ENCODE measurements at regions of chr3 and their contacts with region 1.

Region 1: GRCh38 chr3:47781685-47782445 is at the start of gene SMARCC1:
- DNase-seq: peak; percentile 100
- H3K4me3 Mint-ChIP-seq: peak within 1 kb of the TSS; percentile 96
- H3K27ac Mint-ChIP-seq: peak within 1 kb of the TSS; percentile 100
- H3K4me1 Mint-ChIP-seq: peaks cover 22% of the 10 kb centered on the region
- H3K27me3 Mint-ChIP-seq: peaks cover 1% of the 10 kb centered on the region
- total RNA-seq, gene SMARCC1: 148 and 156 TPM in 2 replicates

Region 2: DNA sequence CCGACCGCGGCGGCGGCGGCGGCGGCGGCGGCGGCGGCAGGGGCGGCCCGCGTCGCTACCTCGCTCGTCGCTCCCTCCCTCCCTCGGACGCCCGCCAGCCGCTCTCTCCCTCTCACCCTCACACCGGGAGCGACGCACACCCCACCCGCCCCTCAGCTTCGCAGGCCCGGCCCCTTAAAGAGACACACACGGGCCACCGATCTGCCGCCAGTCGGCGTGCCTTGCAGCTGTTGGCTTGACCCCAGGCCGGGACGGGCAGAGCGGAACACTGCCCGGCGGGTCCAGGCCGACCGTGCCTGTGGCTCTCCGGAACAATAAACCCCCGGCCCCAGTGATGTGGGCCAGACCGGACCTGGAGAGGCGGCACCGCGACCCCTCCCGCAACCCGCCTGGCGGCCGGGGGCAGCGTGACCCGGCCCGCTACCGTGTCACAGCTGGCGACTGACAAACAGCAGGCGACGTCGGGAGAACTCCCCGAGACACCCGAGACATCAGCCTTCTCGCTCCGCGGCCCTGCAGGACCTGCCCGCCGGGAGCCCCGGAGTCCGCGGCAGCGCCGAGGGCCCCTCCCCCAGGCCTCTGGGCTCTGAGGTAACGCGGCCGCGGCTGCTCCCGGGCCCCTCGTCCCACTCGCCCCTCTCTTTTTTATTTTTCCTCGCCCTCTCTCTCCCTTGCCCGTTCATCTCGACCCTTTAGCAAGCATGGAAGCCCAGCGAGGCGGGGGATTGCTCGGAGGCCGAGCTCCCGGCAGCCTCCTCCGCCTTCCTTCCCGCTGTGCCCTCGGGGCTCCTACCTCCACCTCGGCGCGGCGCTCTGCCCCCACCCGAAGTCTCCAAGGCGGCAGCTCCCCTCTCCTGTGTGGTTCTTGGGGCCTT is 617.6 kb before region 1 on chr3 and contains the start of gene SETD2:
- intact Hi-C with region 1: loop called (anchors 10 kb)
- DNase-seq: peak; percentile 94
- H3K4me3 Mint-ChIP-seq: peak within 1 kb of the TSS; percentile 94
- H3K27ac Mint-ChIP-seq: peak within 1 kb of the TSS; percentile 98
- H3K4me1 Mint-ChIP-seq: peaks cover 46% of the 10 kb centered on the region
- H3K27me3 Mint-ChIP-seq: no peaks in the 10 kb centered on the region
- total RNA-seq, gene SETD2: 41.5 and 42.0 TPM in 2 replicates

Region 3: DNA sequence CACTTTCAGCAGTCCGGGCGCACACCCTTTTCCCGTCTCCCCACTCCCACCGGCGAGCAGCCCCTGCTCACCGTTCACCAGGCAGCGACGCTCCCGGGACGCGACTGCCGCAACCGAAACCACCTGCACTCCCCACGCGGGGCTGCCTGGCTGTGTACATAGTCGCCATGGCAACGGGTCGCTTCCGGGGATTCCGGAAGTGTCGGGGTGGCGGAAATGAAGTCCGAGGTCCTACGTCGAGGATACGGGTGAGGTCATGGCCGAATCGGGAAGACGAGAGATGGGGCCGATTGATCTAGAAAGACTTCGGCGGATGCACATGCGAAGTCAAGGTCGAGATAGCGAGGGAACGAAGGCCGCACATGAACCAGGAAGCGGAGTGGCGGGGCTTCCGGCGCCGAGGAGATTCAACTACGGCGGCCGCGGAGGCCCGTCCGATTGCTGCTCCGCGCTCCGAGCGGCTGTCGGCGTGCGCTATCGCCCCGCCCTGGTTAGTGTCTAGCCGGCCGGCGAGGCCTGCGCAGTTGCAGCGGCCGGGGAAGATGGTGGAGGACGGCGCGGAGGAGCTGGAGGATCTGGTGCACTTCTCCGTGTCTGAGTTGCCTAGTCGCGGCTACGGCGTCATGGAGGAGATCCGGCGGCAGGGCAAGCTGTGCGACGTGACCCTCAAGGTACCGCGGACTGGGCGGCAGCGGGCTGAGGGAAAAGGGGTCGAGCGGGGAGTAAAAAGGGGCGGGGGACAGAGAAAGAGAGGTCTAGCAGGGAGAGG is 499.3 kb before region 1 on chr3 and contains the starts of genes KIF9 and KLHL18:
- intact Hi-C with region 1: loop called (anchors 5 kb)
- DNase-seq: peak; percentile 98
- H3K4me3 Mint-ChIP-seq: peak within 1 kb of the TSS; percentile 100
- H3K27ac Mint-ChIP-seq: peak within 1 kb of the TSS; percentile 100
- H3K4me1 Mint-ChIP-seq: peaks cover 29% of the 10 kb centered on the region
- H3K27me3 Mint-ChIP-seq: peaks cover 3% of the 10 kb centered on the region
- total RNA-seq, gene KIF9: 3.0 and 3.6 TPM in 2 replicates
- total RNA-seq, gene KLHL18: 47.0 and 49.3 TPM in 2 replicates

Region 4: DNA sequence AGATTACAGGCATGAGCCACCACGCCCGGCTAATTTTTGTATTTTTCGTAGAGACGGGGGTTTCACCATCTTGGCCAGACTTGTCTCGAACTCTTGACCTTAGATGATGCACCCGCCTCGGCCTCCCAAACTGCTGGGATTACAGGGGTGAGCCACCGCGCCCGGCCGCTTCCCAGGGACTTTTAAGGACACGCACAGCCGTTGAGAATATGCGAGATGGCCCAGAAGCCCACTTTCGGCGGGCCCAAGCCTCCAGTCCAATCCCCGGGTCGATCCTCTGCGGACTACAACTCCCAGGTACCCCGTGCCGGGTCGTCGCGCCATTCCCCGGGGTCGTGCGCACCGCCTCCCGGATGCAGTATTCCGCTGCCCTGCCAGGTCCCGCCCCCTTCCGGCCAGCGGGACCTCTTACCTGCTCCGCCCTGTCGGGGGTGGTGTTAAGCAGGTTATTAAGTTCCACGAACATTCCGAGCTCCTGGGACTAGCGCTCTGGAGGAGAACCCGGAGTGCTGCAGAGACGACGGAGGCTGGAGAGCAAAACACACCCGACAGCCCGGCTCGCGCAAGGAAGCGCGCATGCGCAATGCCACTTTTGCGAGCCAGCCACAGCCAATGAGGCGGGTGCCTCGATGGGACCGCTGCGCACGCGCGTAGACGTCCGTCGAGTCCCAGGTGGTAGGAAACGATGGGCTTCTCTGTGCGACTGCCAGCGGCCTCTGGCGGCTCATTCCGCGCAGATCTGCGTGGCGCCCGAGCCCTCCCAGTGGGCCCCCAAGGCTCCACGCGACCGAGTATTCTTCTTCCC is 268.5 kb before region 1 on chr3 and contains the start of gene ELP6:
- intact Hi-C with region 1: loop called (anchors 1 kb)
- DNase-seq: peak; percentile 99
- H3K4me3 Mint-ChIP-seq: peak within 1 kb of the TSS; percentile 98
- H3K27ac Mint-ChIP-seq: peak within 1 kb of the TSS; percentile 98
- H3K4me1 Mint-ChIP-seq: peaks cover 17% of the 10 kb centered on the region
- H3K27me3 Mint-ChIP-seq: peaks cover 13% of the 10 kb centered on the region
- total RNA-seq, gene ELP6: 45.9 and 49.7 TPM in 2 replicates

Region 5: GRCh38 chr3:47578119-47578632 is 203.7 kb before region 1 on chr3:
- intact Hi-C with region 1: loop called (anchors 5 kb)
- DNase-seq: peak; percentile 87
- H3K4me3 Mint-ChIP-seq: peak overlapping the region; percentile 73
- H3K27ac Mint-ChIP-seq: no peak overlapping the region
- H3K4me1 Mint-ChIP-seq: no peaks in the 10 kb centered on the region
- H3K27me3 Mint-ChIP-seq: peaks cover 34% of the 10 kb centered on the region

Region 6: DNA sequence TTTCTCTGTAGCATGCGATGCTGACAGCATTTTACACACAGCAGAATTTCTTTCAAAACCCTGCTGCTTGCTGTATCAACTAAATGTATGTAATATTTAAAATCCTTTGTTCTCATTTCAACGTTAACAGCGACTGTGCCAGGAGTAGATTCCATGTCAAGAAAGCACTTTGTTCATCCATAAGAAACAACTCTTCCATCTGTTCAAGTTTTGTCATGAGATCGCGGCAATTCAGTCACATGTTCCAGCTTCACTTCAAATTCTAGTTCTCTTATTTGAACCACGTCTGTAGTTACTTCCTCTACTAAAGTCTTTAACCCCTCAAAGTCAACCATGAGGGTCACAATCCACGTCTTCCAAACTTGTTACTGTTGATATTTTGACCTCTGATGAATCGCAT is 50.8 kb before region 1 on chr3:
- intact Hi-C with region 1: loop called (anchors 10 kb)
- DNase-seq: no peak
- H3K4me3 Mint-ChIP-seq: no peak overlapping the region
- H3K27ac Mint-ChIP-seq: no peak overlapping the region
- H3K4me1 Mint-ChIP-seq: peaks cover 8% of the 10 kb centered on the region
- H3K27me3 Mint-ChIP-seq: no peaks in the 10 kb centered on the region

Region 7: DNA sequence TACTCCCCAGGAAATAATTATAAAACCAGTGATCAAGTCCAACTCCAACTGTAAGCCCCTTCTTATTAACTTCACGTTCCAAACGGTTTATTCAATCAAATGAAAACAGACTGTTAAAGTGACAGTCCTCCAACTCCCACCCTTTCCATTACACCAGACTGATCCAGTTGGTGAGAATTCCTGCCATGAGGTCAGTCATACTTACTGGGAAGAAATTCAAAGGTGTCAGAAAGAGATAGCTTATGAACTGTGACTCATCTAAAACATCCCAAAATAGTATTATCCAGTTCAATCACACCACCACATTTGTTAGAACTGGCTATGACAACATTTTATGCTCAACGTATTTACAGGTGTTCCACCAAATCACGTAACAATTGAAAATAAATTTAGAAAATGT is 19.6 kb before region 1 on chr3:
- intact Hi-C with region 1: no loop called
- DNase-seq: no peak
- H3K4me3 Mint-ChIP-seq: no peak overlapping the region
- H3K27ac Mint-ChIP-seq: peak overlapping the region; percentile 47
- H3K4me1 Mint-ChIP-seq: peaks cover 6% of the 10 kb centered on the region
- H3K27me3 Mint-ChIP-seq: no peaks in the 10 kb centered on the region

Region 8: GRCh38 chr3:47802734-47803477 is 21.0 kb after region 1 on chr3 and contains the start of gene DHX30:
- intact Hi-C with region 1: loop called (anchors 1 kb)
- DNase-seq: peak; percentile 96
- H3K4me3 Mint-ChIP-seq: peak within 1 kb of the TSS; percentile 99
- H3K27ac Mint-ChIP-seq: peak within 1 kb of the TSS; percentile 96
- H3K4me1 Mint-ChIP-seq: peaks cover 19% of the 10 kb centered on the region
- H3K27me3 Mint-ChIP-seq: no peaks in the 10 kb centered on the region
- total RNA-seq, gene DHX30: 143 and 149 TPM in 2 replicates